Activated B cell treated with CpG ODN at 0.5 μM for 24 hours (primary cell): ENCODE measurements at regions of chr1 and their contacts with region 1.

Region 1: DNA sequence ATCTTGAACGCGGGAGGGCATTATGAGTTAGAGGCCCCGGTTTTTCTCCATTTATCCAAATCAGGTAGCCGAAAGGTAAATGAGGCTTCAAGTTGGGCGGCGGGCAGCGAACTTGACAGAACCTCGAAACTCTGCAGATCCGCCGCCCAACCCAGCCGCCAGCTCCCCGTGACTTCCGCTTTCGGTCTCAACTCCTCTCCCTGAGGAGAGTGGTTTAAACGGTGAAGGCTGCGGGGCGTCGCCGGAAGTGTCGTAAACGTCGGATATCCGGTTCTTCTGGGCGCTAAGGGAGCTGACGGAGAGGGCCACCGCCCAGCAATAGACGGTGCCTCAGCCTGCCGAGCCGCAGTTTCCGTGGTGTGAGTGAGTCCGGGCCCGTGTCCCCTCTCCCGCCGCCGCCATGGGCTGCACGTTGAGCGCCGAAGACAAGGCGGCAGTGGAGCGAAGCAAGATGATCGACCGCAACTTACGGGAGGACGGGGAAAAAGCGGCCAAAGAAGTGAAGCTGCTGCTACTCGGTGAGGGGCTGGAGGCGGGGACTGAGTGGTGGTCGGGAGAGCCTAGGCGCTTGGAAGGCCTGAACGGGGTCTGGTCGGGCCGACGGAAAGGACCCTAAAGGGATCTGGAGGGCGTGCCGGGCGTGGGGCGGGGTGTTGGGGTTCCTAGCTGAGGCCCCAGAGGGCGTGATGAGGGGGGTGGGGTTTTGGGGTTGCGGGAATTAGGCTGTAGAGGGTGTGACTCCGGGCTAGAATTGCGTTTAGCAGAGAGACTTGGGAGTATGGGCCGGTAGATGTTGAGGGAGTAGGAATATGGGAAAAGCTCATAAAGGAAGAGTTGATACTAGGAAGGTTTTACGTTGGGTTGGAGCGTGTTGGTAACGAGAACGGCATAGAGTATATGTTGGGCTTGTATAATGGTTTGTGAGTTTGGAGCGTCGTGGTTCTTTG is at the start of gene GNAI3:
- DNase-seq: peak; percentile 93
- ATAC-seq: peak; percentile 90
- H3K4me3 Mint-ChIP-seq: peak within 1 kb of the TSS; percentile 100
- H3K27ac Mint-ChIP-seq: peak within 1 kb of the TSS; percentile 99
- H3K4me1 Mint-ChIP-seq: peaks cover 56% of the 10 kb centered on the region
- H3K27me3 Mint-ChIP-seq: no peaks in the 10 kb centered on the region
- CTCF ChIP-seq: no peak
- total RNA-seq, gene GNAI3: 7.5 and 8.4 TPM in 2 replicates

Region 2: DNA sequence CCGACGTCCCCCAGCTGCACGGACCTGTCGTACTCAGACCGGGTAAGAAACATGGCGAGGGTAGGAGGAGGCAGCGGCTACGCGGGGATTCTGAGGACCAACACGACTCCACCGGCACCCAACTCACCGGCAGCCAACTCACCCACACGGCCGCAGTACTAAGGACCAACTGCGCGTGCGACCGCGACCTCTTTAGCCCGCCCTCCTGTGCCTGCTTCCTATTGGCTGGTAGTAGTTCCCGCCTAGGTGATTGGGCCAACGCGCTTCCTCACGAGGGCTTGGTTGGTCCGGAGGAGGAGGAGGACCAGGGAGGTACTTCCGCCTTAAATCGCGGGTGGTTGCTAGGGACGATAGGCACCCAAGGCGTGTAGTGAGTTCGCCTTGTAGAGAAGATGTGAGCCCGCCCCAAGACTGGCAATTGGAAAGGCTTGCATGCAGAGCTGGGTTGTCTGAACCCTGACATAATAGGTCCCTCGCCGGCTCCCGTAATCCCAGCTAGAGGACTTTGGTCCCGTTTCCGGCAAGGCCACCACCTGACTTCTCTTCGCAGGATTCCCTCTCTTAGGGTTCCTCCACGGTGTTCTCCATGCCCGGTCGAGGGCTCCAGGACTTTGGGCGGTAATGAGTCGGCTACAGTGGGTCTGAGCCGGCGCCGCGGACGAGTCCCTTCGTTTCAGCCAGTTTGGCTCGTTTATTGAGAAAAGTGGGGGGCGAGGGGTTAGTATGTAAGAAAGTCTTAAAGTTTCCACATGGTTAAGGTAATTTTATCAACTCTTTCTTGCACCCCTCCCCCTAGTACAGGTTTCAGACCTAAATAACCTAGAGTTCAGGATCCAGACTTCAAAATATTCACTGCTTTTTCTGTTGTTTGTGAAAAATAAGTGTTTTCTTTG is 122.1 kb before region 1 on chr1 and contains the start of gene PSMA5:
- CTCF ChIA-PET with region 1: interaction called, 5 read pairs
- POLR2A ChIA-PET with region 1: interaction called, 17 read pairs
- intact Hi-C with region 1: loop called (anchors 1 kb)
- DNase-seq: peak; percentile 81
- ATAC-seq: peak; percentile 97
- H3K4me3 Mint-ChIP-seq: peak within 1 kb of the TSS; percentile 96
- H3K27ac Mint-ChIP-seq: peak within 1 kb of the TSS; percentile 97
- H3K4me1 Mint-ChIP-seq: peaks cover 37% of the 10 kb centered on the region
- H3K27me3 Mint-ChIP-seq: no peaks in the 10 kb centered on the region
- CTCF ChIP-seq: no peak
- total RNA-seq, gene PSMA5: 105 and 125 TPM in 2 replicates

Region 3: GRCh38 chr1:109564194-109564878 is 15.7 kb after region 1 on chr1:
- CTCF ChIA-PET with region 1: interaction called, 7 read pairs
- POLR2A ChIA-PET with region 1: interaction called, 13 read pairs
- intact Hi-C with region 1: loop called (anchors 1 kb)
- DNase-seq: no peak
- ATAC-seq: no peak
- H3K4me3 Mint-ChIP-seq: no peak overlapping the region
- H3K27ac Mint-ChIP-seq: no peak overlapping the region
- H3K4me1 Mint-ChIP-seq: peaks cover 58% of the 10 kb centered on the region
- H3K27me3 Mint-ChIP-seq: no peaks in the 10 kb centered on the region
- CTCF ChIP-seq: no peak

Region 4: DNA sequence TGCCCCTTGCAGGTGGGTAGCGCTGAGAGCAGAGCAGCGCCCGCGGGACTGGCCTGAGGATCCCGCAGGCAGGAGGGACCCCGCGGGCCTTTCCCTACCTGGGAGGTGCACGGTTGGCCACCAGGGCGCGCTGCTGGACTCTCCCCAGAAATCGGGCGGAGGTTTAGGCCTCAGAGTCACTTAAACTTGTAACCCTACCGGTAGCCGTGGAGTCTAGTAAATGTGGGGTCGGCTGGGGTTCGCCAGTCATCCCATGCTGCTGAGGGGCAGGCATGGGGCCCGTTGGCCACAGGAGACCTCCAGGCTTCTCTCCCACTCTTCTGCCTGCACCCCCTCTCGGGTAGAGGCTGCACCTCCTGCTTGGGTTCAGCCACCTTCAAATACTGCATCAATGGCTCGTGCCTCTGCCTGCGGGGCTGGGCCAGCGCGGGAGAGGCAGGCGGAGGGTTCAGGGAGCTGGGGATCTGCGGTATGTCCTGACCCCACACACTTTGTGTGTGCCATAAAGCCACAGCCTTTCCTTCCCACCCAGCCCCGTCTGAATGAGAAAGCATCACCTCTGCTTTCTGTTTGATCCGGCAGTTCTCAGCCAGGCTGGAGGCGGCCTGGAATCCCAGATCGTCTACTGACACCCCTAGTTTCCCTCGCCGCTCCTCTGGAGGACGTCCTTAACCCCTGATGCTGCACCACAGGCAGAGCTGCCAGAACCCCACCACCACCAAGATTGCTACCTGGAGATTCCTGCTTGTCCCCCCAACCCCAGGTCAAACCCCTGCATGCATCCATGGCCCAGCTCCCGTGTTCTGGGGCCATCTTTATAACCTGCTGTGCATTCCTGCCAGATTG is 95.0 kb after region 1 on chr1:
- CTCF ChIA-PET with region 1: interaction called, 63 read pairs
- POLR2A ChIA-PET with region 1: interaction called, 16 read pairs
- intact Hi-C with region 1: loop called (anchors 1 kb)
- DNase-seq: peak; percentile 81
- ATAC-seq: peak; percentile 90
- H3K4me3 Mint-ChIP-seq: peak overlapping the region; percentile 24
- H3K27ac Mint-ChIP-seq: no peak overlapping the region
- H3K4me1 Mint-ChIP-seq: peaks cover 19% of the 10 kb centered on the region
- H3K27me3 Mint-ChIP-seq: peaks cover 2% of the 10 kb centered on the region
- CTCF ChIP-seq: peak; percentile 95

Region 5: DNA sequence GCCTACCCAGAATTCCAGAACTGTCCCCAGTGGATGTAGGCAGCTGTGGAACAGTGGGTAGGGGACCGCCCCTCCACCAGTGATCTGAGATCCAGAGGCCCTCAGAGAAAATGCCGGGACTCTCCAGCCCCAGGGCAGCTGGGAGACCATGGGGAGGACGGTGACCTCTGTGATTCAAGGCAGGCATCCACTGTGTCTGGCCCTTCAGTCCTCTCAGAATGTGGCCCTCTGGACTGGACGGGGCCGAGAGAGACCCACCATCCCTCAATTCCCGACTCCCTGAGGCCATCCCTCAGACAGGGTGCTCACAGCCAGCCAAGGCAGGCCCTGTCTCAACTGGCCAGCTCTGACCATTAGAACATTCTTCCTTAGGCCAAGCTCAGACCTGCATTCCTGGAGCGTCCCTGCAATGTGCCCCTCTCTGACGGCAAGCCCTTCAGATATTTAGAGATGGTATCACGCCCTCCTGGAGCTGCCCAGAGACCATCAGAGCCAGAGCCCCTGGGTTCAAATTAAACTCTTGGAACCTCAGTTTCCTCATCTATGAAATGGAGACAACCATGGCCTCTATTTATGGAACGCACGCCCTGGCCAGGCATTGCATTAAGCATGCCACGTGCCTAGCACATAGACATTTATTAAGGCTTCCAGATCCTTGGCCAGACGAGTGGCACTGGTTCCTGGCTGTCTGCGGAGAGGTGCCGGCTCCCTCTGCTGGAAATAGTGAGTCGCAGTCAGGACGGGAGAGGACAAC is 224.7 kb after region 1 on chr1:
- CTCF ChIA-PET with region 1: interaction called, 71 read pairs
- POLR2A ChIA-PET with region 1: interaction called, 4 read pairs
- intact Hi-C with region 1: loop called (anchors 1 kb)
- DNase-seq: peak; percentile 37
- ATAC-seq: peak; percentile 81
- H3K4me3 Mint-ChIP-seq: no peak overlapping the region
- H3K27ac Mint-ChIP-seq: no peak overlapping the region
- H3K4me1 Mint-ChIP-seq: peaks cover 3% of the 10 kb centered on the region
- H3K27me3 Mint-ChIP-seq: peaks cover 12% of the 10 kb centered on the region
- CTCF ChIP-seq: no peak

Region 6: GRCh38 chr1:110034451-110035235 is 486.0 kb after region 1 on chr1 and contains the start of gene STRIP1:
- CTCF ChIA-PET with region 1: interaction called, 3 read pairs
- POLR2A ChIA-PET with region 1: interaction called, 17 read pairs
- intact Hi-C with region 1: loop called (anchors 1 kb)
- DNase-seq: peak; percentile 81
- ATAC-seq: peak; percentile 92
- H3K4me3 Mint-ChIP-seq: peak within 1 kb of the TSS; percentile 93
- H3K27ac Mint-ChIP-seq: peak within 1 kb of the TSS; percentile 90
- H3K4me1 Mint-ChIP-seq: peaks cover 41% of the 10 kb centered on the region
- H3K27me3 Mint-ChIP-seq: no peaks in the 10 kb centered on the region
- CTCF ChIP-seq: no peak
- total RNA-seq, gene STRIP1: 60.4 and 77.3 TPM in 2 replicates